Esophagus muscularis mucosa (tissue), 4 donors: ENCODE measurements at regions of chr22 and their contacts with region 1.

Region 1: GRCh38 chr22:35470903-35471321 is 69.7 kb upstream of the RASD2 start:
- DNase-seq: no peak
- H3K4me3 ChIP-seq: no peak overlapping the region
- H3K27ac ChIP-seq: no peak overlapping the region
- H3K4me1 ChIP-seq: peaks cover 21 to 30% (median 29%) of the 10 kb centered on the region in 4 donors
- H3K27me3 ChIP-seq: no peaks in the 10 kb centered on the region
- CTCF ChIP-seq: no peak
- EP300 ChIP-seq: no peak
- POLR2A ChIP-seq: no peak

Region 2: DNA sequence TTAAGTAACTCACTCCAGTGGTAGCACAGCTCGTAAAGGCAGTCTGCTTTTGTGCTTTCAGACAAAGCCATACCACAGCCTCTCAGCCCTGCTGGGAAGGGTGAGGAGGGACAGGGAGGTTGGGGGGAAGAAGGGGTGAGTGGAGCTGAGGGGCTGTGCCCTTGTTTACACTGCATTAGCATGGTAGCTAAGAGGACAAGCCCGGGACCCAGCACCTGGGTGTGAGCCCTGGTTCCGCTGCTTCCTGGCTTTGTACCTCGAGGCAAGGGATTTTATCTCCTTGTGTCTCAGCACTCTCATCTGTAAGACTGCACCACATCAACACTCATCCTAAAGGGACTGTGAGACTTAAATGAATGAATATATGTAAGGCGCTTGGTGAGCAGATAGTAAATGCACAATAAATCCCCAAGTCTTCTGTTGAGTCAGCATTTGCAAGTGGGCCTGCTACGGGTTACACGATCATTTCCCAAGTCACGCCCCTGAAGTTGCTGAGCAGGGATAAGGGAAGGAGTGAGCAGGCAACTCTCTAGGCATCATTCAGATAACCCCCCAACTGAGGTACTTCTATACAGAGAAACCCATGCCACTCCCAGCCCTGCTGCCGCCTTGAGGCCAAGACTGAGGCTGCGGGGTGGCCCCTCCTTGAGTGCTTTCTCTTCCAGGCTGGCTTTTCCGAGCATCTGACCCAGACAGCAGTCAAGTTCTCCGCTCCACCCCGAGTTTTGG is 77.2 kb after region 1 on chr22:
- intact Hi-C with region 1: loop called (anchors 5 kb)
- DNase-seq: no peak
- H3K4me3 ChIP-seq: no peak overlapping the region
- H3K27ac ChIP-seq: peak overlapping the region; percentile 29 to 64 (median 54)
- H3K4me1 ChIP-seq: peaks cover 21 to 53% (median 48%) of the 10 kb centered on the region in 4 donors
- H3K27me3 ChIP-seq: no peaks in the 10 kb centered on the region
- CTCF ChIP-seq: peak in 1 of 3 experiments; percentile 9
- EP300 ChIP-seq: no peak
- POLR2A ChIP-seq: no peak

Region 3: GRCh38 chr22:35601743-35602630 is 131.1 kb after region 1 on chr22:
- intact Hi-C with region 1: no loop called
- DNase-seq: no peak
- H3K4me3 ChIP-seq: no peak overlapping the region
- H3K27ac ChIP-seq: no peak overlapping the region
- H3K4me1 ChIP-seq: peaks cover 15 to 28% (median 23%) of the 10 kb centered on the region in 4 donors
- H3K27me3 ChIP-seq: no peaks in the 10 kb centered on the region
- CTCF ChIP-seq: no peak
- EP300 ChIP-seq: no peak
- POLR2A ChIP-seq: no peak